Sigmoid colon (tissue), 7 donors: ENCODE measurements at regions of chr9 and their contacts with region 1.

Region 1: GRCh38 chr9:122445155-122445749 is 32.5 kb downstream of the OR1J1 start:
- DNase-seq: no peak
- H3K4me3 ChIP-seq: no peak overlapping the region
- H3K27ac ChIP-seq: no peak overlapping the region
- H3K4me1 ChIP-seq: peaks cover 0 to 3% (median 0%) of the 10 kb centered on the region in 4 donors
- H3K27me3 ChIP-seq: no peaks in the 10 kb centered on the region
- CTCF ChIP-seq: no peak
- EP300 ChIP-seq: no peak
- POLR2A ChIP-seq: no peak

Region 2: GRCh38 chr9:122394265-122395125 is 50.8 kb before region 1 on chr9:
- intact Hi-C with region 1: loop called (anchors 5 kb)
- DNase-seq: peak; percentile 91
- H3K4me3 ChIP-seq: no peak overlapping the region
- H3K27ac ChIP-seq: peak overlapping the region; percentile 77 to 89 (median 86)
- H3K4me1 ChIP-seq: peaks cover 0 to 41% (median 28%) of the 10 kb centered on the region in 4 donors
- H3K27me3 ChIP-seq: no peaks in the 10 kb centered on the region
- CTCF ChIP-seq: no peak
- EP300 ChIP-seq: no peak
- POLR2A ChIP-seq: no peak

Region 3: DNA sequence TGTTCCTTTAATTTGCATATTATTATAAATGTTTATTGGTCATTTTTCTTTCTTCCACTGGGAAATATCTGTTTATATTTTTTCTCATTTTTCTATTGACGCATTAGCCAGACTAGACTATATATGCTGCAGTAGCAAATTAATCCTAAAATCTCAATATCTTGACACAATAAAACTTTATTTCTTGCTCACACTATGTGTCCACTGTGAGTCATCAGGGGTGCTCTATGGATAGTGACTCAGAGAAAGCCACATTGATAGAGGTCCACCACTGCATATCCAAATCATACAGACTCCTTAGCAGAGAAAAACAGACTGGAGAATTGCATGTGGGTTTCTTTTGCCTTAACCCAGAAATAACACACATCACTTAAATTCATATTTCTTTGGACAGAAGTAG is 250.4 kb after region 1 on chr9:
- intact Hi-C with region 1: no loop called
- DNase-seq: no peak
- H3K4me3 ChIP-seq: no peak overlapping the region
- H3K27ac ChIP-seq: no peak overlapping the region
- H3K4me1 ChIP-seq: no peaks in the 10 kb centered on the region
- H3K27me3 ChIP-seq: no peaks in the 10 kb centered on the region
- CTCF ChIP-seq: no peak
- EP300 ChIP-seq: no peak
- POLR2A ChIP-seq: no peak